CD8-positive, alpha-beta T cell (primary cell): ENCODE measurements at regions of chrX and their contacts with region 1.

Region 1: DNA sequence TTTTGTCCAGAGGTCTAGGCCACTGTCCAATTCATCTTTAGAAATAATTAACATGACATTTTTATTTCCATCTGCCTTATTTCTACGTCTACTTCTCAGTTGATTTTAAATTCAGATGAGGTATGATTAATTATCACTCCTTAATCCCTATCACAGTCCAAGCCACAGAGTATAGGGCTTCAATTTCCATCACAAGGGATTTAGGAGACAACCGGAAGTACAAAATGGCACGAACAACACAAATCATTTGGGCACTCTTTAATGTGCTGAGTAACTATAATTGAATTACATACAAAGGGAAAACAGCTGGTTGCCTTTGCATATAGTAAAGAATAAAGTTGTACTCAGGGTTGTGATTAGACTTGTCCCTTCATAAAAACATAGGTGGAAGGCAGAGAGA is 290.5 kb upstream of the MAGEB16 start:
- DNase-seq: no peak
- ATAC-seq: no peak
- H3K4me3 ChIP-seq: no peak overlapping the region
- H3K4me3 Mint-ChIP-seq: no peak overlapping the region
- H3K27ac ChIP-seq: no peak overlapping the region
- H3K27ac Mint-ChIP-seq: no peak overlapping the region
- H3K4me1 ChIP-seq: no peaks in the 10 kb centered on the region
- H3K4me1 Mint-ChIP-seq: no peaks in the 10 kb centered on the region
- H3K27me3 ChIP-seq: no peaks in the 10 kb centered on the region
- H3K27me3 Mint-ChIP-seq: no peaks in the 10 kb centered on the region
- CTCF ChIP-seq: no peak

Region 2: DNA sequence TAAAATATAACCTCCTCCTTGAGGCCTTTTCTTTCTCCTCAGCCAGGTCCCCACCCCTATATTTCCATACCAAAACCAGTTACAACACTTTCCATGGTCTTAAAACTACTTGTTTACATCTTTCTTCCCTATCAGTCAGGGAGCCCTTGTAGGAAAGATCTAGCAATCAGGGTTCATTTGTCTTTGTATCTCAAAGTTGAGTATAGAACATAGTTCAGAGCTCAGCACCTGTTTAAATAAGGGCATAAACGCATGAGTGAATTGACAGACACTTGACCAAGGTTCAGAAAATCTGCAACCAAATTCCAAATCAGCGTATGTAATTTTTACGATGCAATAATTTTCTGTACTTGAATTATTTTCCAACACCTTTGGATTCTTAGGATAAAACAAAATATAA is 61.8 kb before region 1 on chrX:
- CTCF ChIA-PET with region 1: no interaction called
- POLR2A ChIA-PET with region 1: no interaction called
- intact Hi-C with region 1: loop called in 1 of 2 experiments (anchors 10 kb)
- DNase-seq: no peak
- ATAC-seq: no peak
- H3K4me3 ChIP-seq: no peak overlapping the region
- H3K4me3 Mint-ChIP-seq: no peak overlapping the region
- H3K27ac ChIP-seq: no peak overlapping the region
- H3K27ac Mint-ChIP-seq: no peak overlapping the region
- H3K4me1 ChIP-seq: no peaks in the 10 kb centered on the region
- H3K4me1 Mint-ChIP-seq: no peaks in the 10 kb centered on the region
- H3K27me3 ChIP-seq: no peaks in the 10 kb centered on the region
- H3K27me3 Mint-ChIP-seq: no peaks in the 10 kb centered on the region
- CTCF ChIP-seq: no peak